Heart left ventricle (tissue), 16 donors: ENCODE measurements at regions of chr2 and their contacts with region 1.

Region 1: GRCh38 chr2:61460163-61460562 is 10.7 kb downstream of the USP34 start:
- DNase-seq: no peak
- ATAC-seq: peak in 1 of 4 donors; percentile 37
- H3K4me3 ChIP-seq: no peak overlapping the region
- H3K27ac ChIP-seq: peak overlapping the region in 2 of 12 donors; percentile 1 to 55
- H3K4me1 ChIP-seq: peaks cover 0 to 61% (median 46%) of the 10 kb centered on the region in 12 donors
- H3K27me3 ChIP-seq: no peaks in the 10 kb centered on the region
- CTCF ChIP-seq: no peak
- POLR2A ChIP-seq: no peak

Region 2: GRCh38 chr2:61419129-61419528 is 41.0 kb before region 1 on chr2:
- intact Hi-C with region 1: loop called in 1 of 10 experiments (anchors 10 kb)
- DNase-seq: no peak
- ATAC-seq: no peak
- H3K4me3 ChIP-seq: no peak overlapping the region
- H3K27ac ChIP-seq: no peak overlapping the region
- H3K4me1 ChIP-seq: peaks cover 7 to 55% (median 32%) of the 10 kb centered on the region in 12 donors
- H3K27me3 ChIP-seq: no peaks in the 10 kb centered on the region
- CTCF ChIP-seq: no peak
- POLR2A ChIP-seq: no peak

Region 3: DNA sequence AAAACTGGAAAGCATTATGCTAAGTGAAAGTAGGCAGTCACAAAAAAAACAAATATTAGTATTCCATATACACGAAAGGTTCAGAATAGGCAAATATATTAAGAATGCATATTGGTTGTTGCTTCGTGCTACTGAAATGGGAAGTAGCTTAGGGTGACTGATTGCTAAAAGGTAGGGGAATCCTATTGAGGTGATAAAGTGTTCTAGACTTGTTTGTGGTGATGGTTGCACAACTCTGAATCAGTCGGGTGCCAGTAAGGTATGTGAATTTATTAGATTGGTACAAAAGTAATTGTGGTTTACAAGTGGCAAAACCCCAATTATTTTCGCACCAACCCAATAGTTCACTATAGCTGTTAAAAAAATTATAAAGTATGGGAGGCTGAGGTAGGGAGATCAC is 10.0 kb before region 1 on chr2:
- intact Hi-C with region 1: no loop called
- DNase-seq: no peak
- ATAC-seq: no peak
- H3K4me3 ChIP-seq: no peak overlapping the region
- H3K27ac ChIP-seq: no peak overlapping the region
- H3K4me1 ChIP-seq: peaks cover 0 to 12% (median 2%) of the 10 kb centered on the region in 12 donors
- H3K27me3 ChIP-seq: no peaks in the 10 kb centered on the region
- CTCF ChIP-seq: no peak
- POLR2A ChIP-seq: no peak